ENCODE measurements at regions of chr14 and their contacts with region 1.

Region 1: DNA sequence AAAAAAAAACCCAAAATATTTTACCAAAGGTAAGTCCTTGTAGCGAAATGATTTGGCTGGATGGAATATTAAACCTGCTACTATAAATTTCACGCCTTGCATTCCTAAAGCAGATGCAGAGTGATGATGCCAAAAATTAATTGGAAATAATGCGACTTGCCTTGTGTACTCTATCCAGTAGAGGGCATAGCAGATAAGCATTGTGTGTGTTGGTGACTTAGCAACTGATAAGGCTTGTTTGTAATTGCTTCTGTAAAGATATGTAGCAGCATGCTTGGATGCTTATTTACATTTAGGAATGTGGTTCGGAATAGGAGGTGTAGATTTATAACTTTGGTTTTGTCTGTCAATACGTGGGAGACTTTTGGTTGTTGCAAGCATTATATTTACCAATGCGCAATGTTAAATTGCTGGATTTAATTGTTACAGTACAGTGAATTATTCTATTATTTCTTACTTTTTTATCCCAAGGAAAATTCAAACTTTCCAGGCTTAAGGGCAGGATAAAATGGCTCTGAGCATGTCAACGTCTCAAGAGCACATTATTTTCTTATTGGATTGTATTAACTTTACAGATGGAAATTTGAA is 80.5 kb downstream of the TMEM260 start:
- DNase-seq: peak; percentile 32
- ATAC-seq: peak; percentile 86
- H3K4me3 ChIP-seq: no peak overlapping the region
- H3K27ac ChIP-seq: no peak overlapping the region
- H3K4me1 ChIP-seq: no peaks in the 10 kb centered on the region
- H3K27me3 ChIP-seq: no peaks in the 10 kb centered on the region
- CTCF ChIP-seq: peak; percentile 59 to 80 (median 70)
- POLR2A ChIP-seq: no peak
- RAD21 ChIP-seq: peak; percentile 75

Region 2: GRCh38 chr14:56579345-56580220 is 80.5 kb before region 1 on chr14 and contains the start of gene TMEM260:
- CTCF ChIA-PET with region 1: no interaction called
- POLR2A ChIA-PET with region 1: no interaction called
- RAD21 ChIA-PET with region 1: no interaction called
- intact Hi-C with region 1: no loop called
- DNase-seq: peak; percentile 85
- ATAC-seq: peak; percentile 91
- H3K4me3 ChIP-seq: peak within 1 kb of the TSS; percentile 88 to 97
- H3K27ac ChIP-seq: peak within 1 kb of the TSS; percentile 50
- H3K4me1 ChIP-seq: peaks cover 10 to 15% of the 10 kb centered on the region in 2 experiments
- H3K27me3 ChIP-seq: no peaks in the 10 kb centered on the region
- CTCF ChIP-seq: peak; percentile 22 to 88 (median 82); a peak in 5 of 6 replicates
- POLR2A ChIP-seq: no peak
- RAD21 ChIP-seq: no peak
- total RNA-seq, gene TMEM260: 12.5 TPM

Region 3: DNA sequence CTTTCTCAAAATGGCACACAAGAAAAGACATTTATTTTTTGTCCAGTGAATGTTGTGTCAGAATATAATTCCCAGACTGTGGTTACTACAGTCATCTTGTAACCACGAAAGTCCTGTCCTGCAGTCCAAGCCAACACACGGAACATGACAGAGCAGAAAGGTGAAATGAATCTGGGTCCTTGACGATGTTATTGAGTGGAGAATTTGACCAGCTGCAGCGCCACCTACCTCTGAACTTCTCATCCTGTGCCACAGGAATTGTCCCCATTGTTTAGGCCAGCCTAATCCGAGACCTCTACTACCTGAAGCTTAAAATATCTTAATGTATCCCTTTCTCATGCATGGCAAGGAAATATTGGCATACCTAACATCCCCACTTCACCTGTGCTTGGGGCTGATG is 214.3 kb after region 1 on chr14:
- CTCF ChIA-PET with region 1: no interaction called
- POLR2A ChIA-PET with region 1: no interaction called
- RAD21 ChIA-PET with region 1: no interaction called
- intact Hi-C with region 1: loop called (anchors 5 kb)
- DNase-seq: peak; percentile 26
- ATAC-seq: peak; percentile 96
- H3K4me3 ChIP-seq: no peak overlapping the region
- H3K27ac ChIP-seq: no peak overlapping the region
- H3K4me1 ChIP-seq: no peaks in the 10 kb centered on the region; a peak in 1 of 4 replicates
- H3K27me3 ChIP-seq: peaks cover 9% of the 10 kb centered on the region; the same call in 1 of the 2 replicates
- CTCF ChIP-seq: peak; percentile 23 to 72 (median 64); a peak in 5 of 6 replicates
- POLR2A ChIP-seq: no peak
- RAD21 ChIP-seq: peak; percentile 49

Region 4: DNA sequence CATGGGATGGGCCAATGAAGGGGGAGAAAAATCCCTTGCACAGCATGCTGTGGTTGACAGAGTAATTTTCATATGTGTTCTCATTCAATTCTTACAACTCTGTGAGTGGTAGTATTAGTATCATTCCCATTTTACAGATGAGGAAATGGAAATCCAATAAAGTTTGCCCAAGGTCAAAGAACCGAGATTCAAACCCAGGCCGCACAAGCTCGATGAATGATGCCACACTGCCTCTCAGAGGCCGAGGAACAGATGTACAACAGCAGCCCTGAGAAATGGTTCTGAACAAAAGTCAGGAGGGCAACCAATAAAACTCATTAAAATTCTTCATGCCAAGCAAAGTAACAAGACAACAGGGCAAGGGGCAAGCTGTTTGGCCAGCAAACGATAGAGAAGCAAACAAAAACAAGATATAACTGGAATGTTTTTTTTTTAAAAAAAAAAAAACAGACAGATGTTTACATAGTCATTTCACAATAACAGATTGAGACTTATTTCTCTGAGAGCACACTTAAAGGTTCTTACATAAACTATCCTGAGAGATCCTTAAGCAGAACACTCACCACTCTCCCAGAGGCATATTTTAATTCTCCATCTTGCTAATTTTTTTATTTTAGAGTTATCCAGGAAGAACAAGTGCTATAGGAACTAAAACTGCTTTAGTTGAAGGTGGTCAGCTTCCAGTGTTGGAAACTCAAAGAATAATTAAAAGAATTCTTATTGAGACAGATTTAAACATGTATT is 522.9 kb after region 1 on chr14:
- CTCF ChIA-PET with region 1: no interaction called
- POLR2A ChIA-PET with region 1: no interaction called
- RAD21 ChIA-PET with region 1: no interaction called
- intact Hi-C with region 1: loop called (anchors 5 kb)
- DNase-seq: peak; percentile 16
- ATAC-seq: peak; percentile 78
- H3K4me3 ChIP-seq: no peak overlapping the region
- H3K27ac ChIP-seq: no peak overlapping the region
- H3K4me1 ChIP-seq: no peaks in the 10 kb centered on the region
- H3K27me3 ChIP-seq: peaks cover 28% of the 10 kb centered on the region
- CTCF ChIP-seq: peak; percentile 63 to 75 (median 64)
- POLR2A ChIP-seq: no peak
- RAD21 ChIP-seq: peak; percentile 86

Region 5: DNA sequence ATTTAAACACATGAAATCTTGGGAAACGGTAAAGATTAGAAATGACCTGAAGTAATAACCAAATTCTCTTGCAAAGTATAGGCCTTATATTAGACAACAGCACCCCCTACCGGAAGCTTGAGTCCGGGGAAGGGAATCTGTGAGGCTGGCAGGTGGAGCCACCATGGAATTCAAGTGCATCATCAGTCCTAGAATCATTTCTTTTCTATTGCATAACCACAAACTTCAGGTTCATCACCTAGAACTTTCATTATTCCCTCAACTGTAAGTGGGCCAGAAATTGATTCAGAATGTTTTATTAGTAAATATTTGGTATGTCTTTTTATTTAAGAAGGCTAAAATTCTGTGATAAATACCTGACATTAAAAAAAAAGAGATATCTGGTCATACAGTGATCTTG is 657.3 kb after region 1 on chr14:
- CTCF ChIA-PET with region 1: no interaction called
- POLR2A ChIA-PET with region 1: no interaction called
- RAD21 ChIA-PET with region 1: no interaction called
- intact Hi-C with region 1: loop called (anchors 5 kb)
- DNase-seq: peak; percentile 79
- ATAC-seq: peak; percentile 91
- H3K4me3 ChIP-seq: no peak overlapping the region
- H3K27ac ChIP-seq: no peak overlapping the region
- H3K4me1 ChIP-seq: no peaks in the 10 kb centered on the region
- H3K27me3 ChIP-seq: peaks cover 17% of the 10 kb centered on the region; the same call in 1 of the 2 replicates
- CTCF ChIP-seq: peak; percentile 76 to 89 (median 82)
- POLR2A ChIP-seq: no peak
- RAD21 ChIP-seq: peak; percentile 81

Measured in HCT116 (cell line).